Caco-2 (cell line): ENCODE measurements at regions of chr7 and their contacts with region 1.

Region 1: GRCh38 chr7:27095897-27096767 is at the start of gene HOXA1:
- DNase-seq: peak; percentile 93 to 95
- H3K4me3 ChIP-seq: peak within 1 kb of the TSS; percentile 86
- H3K4me3 Mint-ChIP-seq: peak within 1 kb of the TSS; percentile 87
- H3K27ac Mint-ChIP-seq: peak within 1 kb of the TSS; percentile 74
- H3K4me1 ChIP-seq: peaks cover 10% of the 10 kb centered on the region
- H3K4me1 Mint-ChIP-seq: peaks cover 50% of the 10 kb centered on the region
- H3K27me3 ChIP-seq: no peaks in the 10 kb centered on the region
- H3K27me3 Mint-ChIP-seq: no peaks in the 10 kb centered on the region
- CTCF ChIP-seq: peak in 1 of 2 experiments; percentile 17
- total RNA-seq, gene HOXA1: 18.5 and 18.8 TPM in 2 replicates

Region 2: DNA sequence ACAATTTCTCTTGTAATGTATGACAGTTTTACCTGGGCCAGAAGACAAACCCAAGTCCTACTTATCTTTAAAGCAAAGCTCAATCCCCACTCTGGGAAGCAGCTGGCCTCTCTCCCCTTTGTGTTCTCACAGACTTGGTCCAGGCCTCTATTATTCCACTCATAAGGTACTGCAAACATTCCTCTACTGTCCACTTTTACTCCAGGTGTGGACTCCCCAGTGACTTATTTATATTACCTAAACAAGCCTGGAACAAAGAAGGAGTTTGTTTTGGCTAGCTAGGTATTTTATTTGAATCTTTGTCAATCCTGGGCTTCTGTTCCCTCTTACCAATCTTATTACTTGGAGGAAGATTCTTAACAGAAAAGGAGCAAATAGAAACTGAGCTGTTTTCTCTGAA is 395.2 kb before region 1 on chr7:
- CTCF ChIA-PET with region 1: no interaction called
- POLR2A ChIA-PET with region 1: interaction called, 10 read pairs
- intact Hi-C with region 1: no loop called
- DNase-seq: no peak
- H3K4me3 ChIP-seq: no peak overlapping the region
- H3K4me3 Mint-ChIP-seq: no peak overlapping the region
- H3K27ac Mint-ChIP-seq: no peak overlapping the region
- H3K4me1 ChIP-seq: peaks cover 17% of the 10 kb centered on the region
- H3K4me1 Mint-ChIP-seq: no peaks in the 10 kb centered on the region
- H3K27me3 ChIP-seq: no peaks in the 10 kb centered on the region
- H3K27me3 Mint-ChIP-seq: no peaks in the 10 kb centered on the region
- CTCF ChIP-seq: no peak

Region 3: DNA sequence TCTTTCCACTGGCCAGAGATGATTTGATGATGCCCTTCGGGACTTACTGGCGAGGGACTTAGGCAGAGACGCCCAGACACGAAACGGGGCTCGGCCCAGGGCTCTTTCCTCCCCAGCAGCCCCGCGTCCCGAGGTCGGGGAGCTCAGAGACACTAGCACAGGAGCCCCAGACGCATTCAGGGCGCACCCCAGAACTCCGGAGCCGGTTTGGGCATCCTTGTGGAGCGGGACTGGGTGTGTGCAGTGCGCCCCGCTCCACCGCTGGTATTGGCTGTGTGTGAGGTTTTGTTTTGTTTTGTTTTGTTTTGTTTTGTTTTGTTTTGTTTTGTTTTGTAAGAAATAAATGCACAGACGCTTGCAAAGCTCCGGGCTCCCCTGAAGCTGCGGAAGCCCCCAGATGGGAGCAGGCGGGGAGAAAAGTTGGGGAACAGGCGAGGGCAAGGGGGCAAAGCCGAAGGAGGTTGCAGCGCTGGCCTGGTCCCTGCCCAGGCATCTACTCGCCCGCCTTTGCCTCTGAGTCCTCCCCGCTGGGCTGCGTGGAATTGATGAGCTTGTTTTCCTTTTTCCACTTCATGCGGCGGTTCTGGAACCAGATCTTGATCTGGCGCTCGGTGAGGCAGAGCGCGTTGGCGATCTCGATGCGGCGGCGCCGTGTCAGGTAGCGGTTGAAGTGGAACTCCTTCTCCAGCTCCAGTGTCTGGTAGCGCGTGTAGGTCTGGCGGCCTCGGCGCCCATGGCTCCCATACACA is 49.2 kb after region 1 on chr7:
- CTCF ChIA-PET with region 1: no interaction called
- POLR2A ChIA-PET with region 1: no interaction called
- intact Hi-C with region 1: no loop called
- DNase-seq: peak in 1 of 2 experiments; percentile 19
- H3K4me3 ChIP-seq: no peak overlapping the region
- H3K4me3 Mint-ChIP-seq: no peak overlapping the region
- H3K27ac Mint-ChIP-seq: no peak overlapping the region
- H3K4me1 ChIP-seq: peaks cover 24% of the 10 kb centered on the region
- H3K4me1 Mint-ChIP-seq: no peaks in the 10 kb centered on the region
- H3K27me3 ChIP-seq: no peaks in the 10 kb centered on the region
- H3K27me3 Mint-ChIP-seq: no peaks in the 10 kb centered on the region
- CTCF ChIP-seq: no peak